ENCODE measurements at regions of chr5 and their contacts with region 1.

Region 1: DNA sequence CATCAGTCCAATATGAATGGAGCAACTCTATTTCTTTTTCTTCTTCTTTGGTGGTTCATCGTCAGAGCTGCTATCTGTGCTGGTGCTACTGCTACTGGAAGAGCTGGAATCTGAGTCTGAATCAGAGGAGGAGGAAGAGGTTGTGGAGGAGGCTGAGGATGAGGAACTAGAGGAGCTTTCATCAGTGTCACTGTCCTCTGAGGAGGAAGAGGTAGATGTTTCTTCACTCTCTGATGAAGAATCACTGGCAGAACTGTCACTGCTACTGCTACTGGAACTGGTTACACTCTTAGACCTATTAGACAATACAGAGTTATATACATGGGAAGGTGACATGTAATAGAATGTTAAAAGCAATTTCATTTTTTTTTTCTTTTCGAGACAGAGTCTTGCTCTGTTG is 27.8 kb downstream of the ZCCHC10 start:
- DNase-seq: no peak
- H3K4me3 ChIP-seq: no peak overlapping the region
- H3K27ac ChIP-seq: no peak overlapping the region
- H3K4me1 ChIP-seq: no peaks in the 10 kb centered on the region
- H3K27me3 ChIP-seq: no peaks in the 10 kb centered on the region
- CTCF ChIP-seq: no peak

Region 2: DNA sequence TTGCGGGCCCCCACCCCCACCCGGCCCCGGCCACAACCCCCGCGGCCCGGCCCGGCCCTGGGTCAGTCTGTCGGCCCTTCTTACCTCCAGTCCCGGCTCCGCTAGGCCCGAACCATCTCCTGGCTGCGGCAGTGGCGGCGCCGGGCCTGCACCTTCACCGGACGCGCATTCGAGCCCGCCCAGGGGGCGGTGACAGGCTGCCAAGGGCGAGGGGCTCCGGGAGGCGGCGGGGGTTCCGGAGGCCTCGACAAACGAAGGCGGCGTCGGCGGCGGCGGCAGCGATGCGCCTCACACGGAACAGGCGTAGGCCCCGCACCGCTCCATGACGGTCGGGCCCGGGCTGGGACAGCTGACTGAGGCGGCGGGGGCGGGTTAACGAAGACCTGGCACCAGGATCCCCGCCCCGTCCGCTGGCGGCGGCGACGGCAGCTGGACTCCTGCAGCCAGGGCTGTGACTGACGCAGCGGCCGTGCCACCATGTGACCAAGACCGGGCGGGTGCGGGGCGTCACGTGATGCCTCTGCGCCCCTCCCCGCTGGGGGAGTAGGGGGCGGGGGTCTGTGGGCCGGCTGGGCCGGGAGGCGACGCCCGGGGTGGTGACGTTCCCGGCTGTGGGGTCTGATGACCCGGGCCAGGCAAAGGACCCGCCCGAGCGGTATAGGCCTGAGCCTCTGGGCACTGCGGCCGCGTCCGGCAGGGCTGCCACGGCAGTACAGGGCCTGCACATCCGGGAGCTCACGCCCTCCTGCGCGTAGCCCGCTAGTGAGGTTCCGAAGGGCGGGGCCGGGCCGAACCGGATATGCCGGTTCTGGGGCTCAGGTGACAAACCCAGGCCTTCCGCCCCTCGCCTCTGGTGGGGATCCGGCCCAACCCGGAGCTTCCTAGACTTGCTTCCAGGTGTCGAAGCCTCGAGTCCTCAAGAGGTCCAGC is 35.1 kb before region 1 on chr5 and contains the start of gene AFF4:
- CTCF ChIA-PET with region 1: no interaction called
- dilution Hi-C with region 1: loop called (anchors 5 kb)
- in situ Hi-C with region 1: no loop called
- intact Hi-C with region 1: no loop called
- DNase-seq: peak; percentile 95
- H3K4me3 ChIP-seq: peak within 1 kb of the TSS; percentile 81 to 100 (median 96)
- H3K27ac ChIP-seq: peak within 1 kb of the TSS; percentile 99
- H3K4me1 ChIP-seq: peaks cover 6% of the 10 kb centered on the region
- H3K27me3 ChIP-seq: no peaks in the 10 kb centered on the region
- CTCF ChIP-seq: no peak
- total RNA-seq, gene AFF4: 107 to 115 TPM

Region 3: GRCh38 chr5:133075572-133076536 is 77.3 kb after region 1 on chr5:
- CTCF ChIA-PET with region 1: no interaction called
- dilution Hi-C with region 1: no loop called
- in situ Hi-C with region 1: no loop called
- intact Hi-C with region 1: no loop called
- DNase-seq: no peak
- H3K4me3 ChIP-seq: no peak overlapping the region
- H3K27ac ChIP-seq: no peak overlapping the region
- H3K4me1 ChIP-seq: no peaks in the 10 kb centered on the region
- H3K27me3 ChIP-seq: no peaks in the 10 kb centered on the region
- CTCF ChIP-seq: no peak

Measured in mammary epithelial cell (primary cell).